ENCODE measurements at regions of chr1 and their contacts with region 1.

Region 1: GRCh38 chr1:26602378-26602959 is 72.9 kb downstream of the RPS6KA1 start:
- DNase-seq: peak; percentile 60 to 76 (median 63)
- H3K4me3 ChIP-seq: no peak overlapping the region
- H3K4me3 Mint-ChIP-seq: no peak overlapping the region
- H3K27ac ChIP-seq: no peak overlapping the region
- H3K27ac Mint-ChIP-seq: no peak overlapping the region
- H3K4me1 ChIP-seq: peaks cover 21 to 32% of the 10 kb centered on the region in 2 donors
- H3K4me1 Mint-ChIP-seq: peaks cover 43% of the 10 kb centered on the region
- H3K27me3 ChIP-seq: no peaks in the 10 kb centered on the region
- H3K27me3 Mint-ChIP-seq: peaks cover 0 to 3% (median 2%) of the 10 kb centered on the region in 3 donors
- CTCF ChIP-seq: peak; percentile 94

Region 2: GRCh38 chr1:26259578-26259977 is 342.9 kb before region 1 on chr1:
- intact Hi-C with region 1: no loop called
- DNase-seq: peak; percentile 75 to 85 (median 77)
- H3K4me3 ChIP-seq: peak overlapping the region in 1 of 3 experiments; percentile 50
- H3K4me3 Mint-ChIP-seq: peak overlapping the region; percentile 21 to 77
- H3K27ac ChIP-seq: peak overlapping the region; percentile 56 to 90
- H3K27ac Mint-ChIP-seq: peak overlapping the region; percentile 78 to 92 (median 89)
- H3K4me1 ChIP-seq: peaks cover 29 to 31% of the 10 kb centered on the region in 2 donors
- H3K4me1 Mint-ChIP-seq: peaks cover 28% of the 10 kb centered on the region
- H3K27me3 ChIP-seq: no peaks in the 10 kb centered on the region
- H3K27me3 Mint-ChIP-seq: peaks cover 0 to under 1% (median 0%) of the 10 kb centered on the region in 3 donors
- CTCF ChIP-seq: no peak

Region 3: GRCh38 chr1:26541816-26542711 is 60.4 kb before region 1 on chr1:
- intact Hi-C with region 1: loop called in 1 of 2 experiments (anchors 5 kb)
- DNase-seq: peak; percentile 99 to 100 (median 99)
- H3K4me3 ChIP-seq: peak overlapping the region; percentile 38 to 89 (median 49)
- H3K4me3 Mint-ChIP-seq: peak overlapping the region; percentile 87 to 93
- H3K27ac ChIP-seq: peak overlapping the region; percentile 97 to 99
- H3K27ac Mint-ChIP-seq: peak overlapping the region; percentile 99 to 100 (median 100)
- H3K4me1 ChIP-seq: peaks cover 90 to 95% of the 10 kb centered on the region in 2 donors
- H3K4me1 Mint-ChIP-seq: peaks cover 88% of the 10 kb centered on the region
- H3K27me3 ChIP-seq: no peaks in the 10 kb centered on the region
- H3K27me3 Mint-ChIP-seq: no peaks in the 10 kb centered on the region
- CTCF ChIP-seq: peak; percentile 88

Region 4: DNA sequence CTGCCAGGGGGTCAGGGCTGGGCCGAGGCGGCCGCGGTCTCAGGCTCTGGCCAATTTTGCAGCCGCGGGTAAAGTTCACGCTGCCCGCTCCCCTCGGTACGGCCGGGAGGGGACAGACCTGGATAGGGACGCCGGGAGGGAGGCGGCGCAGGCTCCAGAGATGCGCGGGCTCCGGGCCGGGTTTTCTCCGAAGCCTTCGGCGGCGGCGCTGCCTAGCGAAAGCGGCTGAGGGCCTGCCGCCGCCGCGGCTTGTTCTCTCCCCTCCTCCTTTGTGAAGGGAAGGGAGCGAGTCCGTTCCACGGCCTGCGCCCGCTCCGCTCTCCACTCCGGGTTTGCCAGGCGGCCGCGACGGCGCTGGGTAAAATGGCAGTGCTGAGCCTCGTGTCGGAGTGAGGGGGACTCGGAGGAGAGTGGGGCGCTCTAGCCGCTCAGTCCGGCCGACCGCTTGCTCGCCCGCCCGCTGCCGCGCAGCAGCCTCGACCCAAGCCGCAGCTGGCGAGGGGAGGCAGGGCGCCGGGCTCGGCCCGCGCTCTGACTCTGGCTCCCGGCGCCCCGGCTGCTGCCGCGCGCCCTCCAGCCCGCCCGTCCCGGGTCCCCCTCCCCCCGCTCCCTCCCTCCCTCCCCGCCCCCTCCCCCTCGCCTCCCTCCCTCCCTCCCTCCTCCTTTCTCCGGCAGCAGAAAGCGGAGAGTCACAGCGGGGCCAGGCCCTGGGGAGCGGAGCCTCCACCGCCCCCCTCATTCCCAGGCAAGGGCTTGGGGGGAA is 93.1 kb after region 1 on chr1 and contains the start of gene ARID1A:
- intact Hi-C with region 1: loop called in 1 of 2 experiments (anchors 5 kb)
- DNase-seq: peak; percentile 90 to 95 (median 91)
- H3K4me3 ChIP-seq: peak within 1 kb of the TSS; percentile 63 to 89 (median 85)
- H3K4me3 Mint-ChIP-seq: peak within 1 kb of the TSS; percentile 82 to 90
- H3K27ac ChIP-seq: peak within 1 kb of the TSS; percentile 62 to 90
- H3K27ac Mint-ChIP-seq: peak within 1 kb of the TSS; percentile 79 to 94 (median 82)
- H3K4me1 ChIP-seq: peaks cover 55 to 65% of the 10 kb centered on the region in 2 donors
- H3K4me1 Mint-ChIP-seq: peaks cover 38% of the 10 kb centered on the region
- H3K27me3 ChIP-seq: no peaks in the 10 kb centered on the region
- H3K27me3 Mint-ChIP-seq: no peaks in the 10 kb centered on the region
- CTCF ChIP-seq: no peak
- polyA plus RNA-seq, gene ARID1A: 6.6 to 84.4 (median 9.5) TPM

Region 5: GRCh38 chr1:26787706-26788514 is 185.4 kb after region 1 on chr1 and contains the start of gene PIGV:
- intact Hi-C with region 1: loop called (anchors 1 kb)
- DNase-seq: peak; percentile 66 to 80 (median 75)
- H3K4me3 ChIP-seq: peak within 1 kb of the TSS; percentile 71 to 97 (median 90)
- H3K4me3 Mint-ChIP-seq: peak within 1 kb of the TSS; percentile 97 to 98
- H3K27ac ChIP-seq: peak within 1 kb of the TSS; percentile 91 to 97
- H3K27ac Mint-ChIP-seq: peak within 1 kb of the TSS; percentile 95 to 99 (median 99)
- H3K4me1 ChIP-seq: peaks cover 51 to 60% of the 10 kb centered on the region in 2 donors
- H3K4me1 Mint-ChIP-seq: peaks cover 61% of the 10 kb centered on the region
- H3K27me3 ChIP-seq: no peaks in the 10 kb centered on the region
- H3K27me3 Mint-ChIP-seq: peaks cover 0 to 2% (median 0%) of the 10 kb centered on the region in 3 donors
- CTCF ChIP-seq: no peak
- polyA plus RNA-seq, gene PIGV: 5.7 to 9.5 (median 8.3) TPM

Region 6: GRCh38 chr1:26874896-26875295 is 272.4 kb after region 1 on chr1:
- intact Hi-C with region 1: loop called (anchors 5 to 10 kb)
- DNase-seq: no peak
- H3K4me3 ChIP-seq: no peak overlapping the region
- H3K4me3 Mint-ChIP-seq: no peak overlapping the region
- H3K27ac ChIP-seq: no peak overlapping the region
- H3K27ac Mint-ChIP-seq: no peak overlapping the region
- H3K4me1 ChIP-seq: no peaks in the 10 kb centered on the region
- H3K4me1 Mint-ChIP-seq: no peaks in the 10 kb centered on the region
- H3K27me3 ChIP-seq: no peaks in the 10 kb centered on the region
- H3K27me3 Mint-ChIP-seq: peaks cover 0 to 2% (median 0%) of the 10 kb centered on the region in 3 donors
- CTCF ChIP-seq: no peak

Measured in CD14-positive monocyte (primary cell).